ACHN (cell line): ENCODE measurements at regions of chr2 and their contacts with region 1.

Region 1: DNA sequence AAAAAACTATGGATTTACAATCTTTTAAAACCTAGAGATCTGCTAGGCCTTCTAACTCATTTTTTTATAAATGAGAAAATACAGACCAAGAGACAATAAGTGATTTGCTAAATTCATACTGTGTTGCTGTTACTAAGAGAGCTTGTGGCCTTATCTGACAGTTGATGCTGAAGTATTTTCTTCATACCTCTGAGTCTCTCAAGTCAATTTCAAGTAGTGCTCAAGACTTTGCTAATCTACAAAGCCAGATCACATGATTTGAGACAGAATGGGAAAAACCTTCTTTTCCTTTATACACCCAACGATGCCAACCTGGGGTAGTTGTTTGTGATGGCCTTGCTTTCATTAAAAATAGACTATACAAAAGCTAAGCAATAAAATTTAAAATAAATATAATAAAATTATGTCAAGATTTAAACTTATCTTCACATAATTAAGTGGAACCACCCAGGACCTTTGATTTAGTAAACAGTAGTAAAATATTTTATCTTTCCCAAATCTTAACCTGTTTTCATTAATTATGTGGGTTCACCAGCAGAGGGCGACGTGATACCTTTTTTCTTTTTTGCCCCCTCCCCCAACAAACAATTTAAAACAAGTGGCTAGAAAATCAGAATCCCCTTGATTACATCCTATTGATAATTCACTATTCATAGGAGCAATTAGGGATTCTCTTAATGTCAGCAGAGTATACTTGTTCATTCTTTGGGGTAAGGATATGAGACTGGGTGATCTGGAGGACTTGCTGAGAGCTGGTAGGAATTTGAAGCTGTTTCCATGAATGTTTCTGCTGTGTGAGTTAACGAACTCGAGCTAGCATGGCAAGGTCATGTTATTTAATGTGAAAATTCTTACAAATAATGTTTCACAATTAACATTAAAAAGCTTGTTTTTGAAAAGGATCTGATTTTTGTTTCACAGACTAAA is 49.6 kb upstream of the SLC5A7 start:
- DNase-seq: peak; percentile 23

Region 2: GRCh38 chr2:108169982-108170625 is 233.4 kb after region 1 on chr2:
- in situ Hi-C with region 1: loop called (anchors 25 kb)
- DNase-seq: peak; percentile 47